Activated naive CD4-positive, alpha-beta T cell treated with anti-CD3 and anti-CD28 coated beads for 36 hours (primary cell): ENCODE measurements at regions of chr5 and their contacts with region 1.

Region 1: DNA sequence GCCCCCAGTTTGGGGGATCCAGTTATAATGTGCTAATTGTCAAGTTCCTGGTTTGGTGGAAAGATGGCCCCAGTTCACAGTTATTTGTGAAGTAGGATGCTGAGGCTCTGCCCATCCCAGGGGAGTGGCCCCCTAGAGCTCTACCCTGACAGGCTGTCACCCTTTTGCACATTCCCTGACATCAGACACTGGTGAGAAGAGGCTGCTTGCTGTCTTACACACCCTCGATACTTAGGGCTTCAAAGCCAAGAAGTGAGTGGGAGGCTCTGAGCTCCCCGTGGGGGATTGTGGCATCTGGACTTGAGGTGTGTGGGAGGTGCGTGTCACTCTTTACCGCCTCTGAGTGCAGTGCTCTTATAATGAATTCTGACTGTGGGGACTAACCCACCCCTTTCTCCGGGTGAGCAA is 168.5 kb downstream of the DOCK2 start:
- DNase-seq: peak; percentile 81
- H3K4me3 Mint-ChIP-seq: peak overlapping the region; percentile 1
- H3K27ac Mint-ChIP-seq: peak overlapping the region; percentile 92
- H3K4me1 Mint-ChIP-seq: peaks cover 38% of the 10 kb centered on the region
- H3K27me3 Mint-ChIP-seq: no peaks in the 10 kb centered on the region

Region 2: DNA sequence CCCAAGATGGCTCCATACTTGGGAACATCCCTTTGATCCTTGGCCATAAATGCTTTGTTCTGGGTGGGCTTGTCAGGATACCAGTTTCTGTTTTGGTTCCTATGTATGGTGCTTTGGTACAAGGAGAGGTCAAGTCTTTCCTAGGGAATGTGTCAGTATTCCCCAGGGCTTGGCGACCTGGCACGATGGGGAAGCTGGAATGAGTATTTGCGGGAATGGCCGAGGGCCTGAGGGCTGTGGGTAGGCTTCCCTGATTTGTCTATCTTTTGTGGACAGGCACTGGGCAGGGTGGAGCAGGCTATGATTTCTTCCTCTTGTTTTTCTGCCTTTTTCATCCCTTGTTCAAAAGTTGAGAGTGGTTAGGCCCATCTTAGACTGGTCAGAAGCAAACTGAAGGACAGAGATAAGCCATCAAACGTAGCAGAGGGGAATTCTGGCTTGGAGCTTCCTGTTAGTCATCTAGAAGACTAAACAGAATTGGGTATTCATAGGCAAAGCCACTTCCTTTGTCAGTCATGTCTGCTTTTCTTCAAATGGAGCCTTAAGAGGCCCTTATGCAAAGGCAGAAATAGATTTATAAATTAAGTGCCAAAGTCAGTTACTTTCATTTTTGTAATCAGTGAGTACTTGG is 154.7 kb before region 1 on chr5:
- CTCF ChIA-PET with region 1: no interaction called
- intact Hi-C with region 1: loop called (anchors 1 kb)
- DNase-seq: peak; percentile 64
- H3K4me3 Mint-ChIP-seq: peak overlapping the region; percentile 49
- H3K27ac Mint-ChIP-seq: peak overlapping the region; percentile 94
- H3K4me1 Mint-ChIP-seq: peaks cover 92% of the 10 kb centered on the region
- H3K27me3 Mint-ChIP-seq: no peaks in the 10 kb centered on the region

Region 3: GRCh38 chr5:169656125-169656901 is 149.2 kb before region 1 on chr5:
- CTCF ChIA-PET with region 1: no interaction called
- intact Hi-C with region 1: loop called (anchors 1 kb)
- DNase-seq: peak; percentile 61
- H3K4me3 Mint-ChIP-seq: peak overlapping the region; percentile 29
- H3K27ac Mint-ChIP-seq: peak overlapping the region; percentile 77
- H3K4me1 Mint-ChIP-seq: peaks cover 61% of the 10 kb centered on the region
- H3K27me3 Mint-ChIP-seq: no peaks in the 10 kb centered on the region

Region 4: GRCh38 chr5:169788166-169788565 is 17.4 kb before region 1 on chr5:
- CTCF ChIA-PET with region 1: no interaction called
- intact Hi-C with region 1: no loop called
- DNase-seq: no peak
- H3K4me3 Mint-ChIP-seq: no peak overlapping the region
- H3K27ac Mint-ChIP-seq: no peak overlapping the region
- H3K4me1 Mint-ChIP-seq: no peaks in the 10 kb centered on the region
- H3K27me3 Mint-ChIP-seq: no peaks in the 10 kb centered on the region

Region 5: DNA sequence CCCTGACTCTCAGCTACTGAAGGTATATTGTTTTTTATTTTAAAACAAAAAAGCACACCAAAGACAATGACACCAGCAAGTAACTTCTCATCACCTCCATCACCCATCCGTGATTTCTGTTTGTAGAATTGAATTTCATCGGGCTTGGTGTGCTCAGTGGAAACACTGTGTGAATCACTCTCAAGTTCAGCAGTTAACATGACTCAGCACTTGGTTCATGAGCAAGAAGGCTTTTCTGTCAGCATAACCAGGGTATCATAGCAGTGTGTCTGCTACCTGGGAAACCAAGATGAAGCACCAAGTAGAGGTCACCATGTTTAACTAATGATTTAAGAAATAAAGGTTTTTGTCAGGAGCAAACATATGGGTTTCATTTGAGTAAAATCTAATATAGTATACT is 51.0 kb after region 1 on chr5:
- CTCF ChIA-PET with region 1: no interaction called
- intact Hi-C with region 1: loop called (anchors 2 kb)
- DNase-seq: peak; percentile 9
- H3K4me3 Mint-ChIP-seq: no peak overlapping the region
- H3K27ac Mint-ChIP-seq: no peak overlapping the region
- H3K4me1 Mint-ChIP-seq: peaks cover 28% of the 10 kb centered on the region
- H3K27me3 Mint-ChIP-seq: no peaks in the 10 kb centered on the region

Region 6: DNA sequence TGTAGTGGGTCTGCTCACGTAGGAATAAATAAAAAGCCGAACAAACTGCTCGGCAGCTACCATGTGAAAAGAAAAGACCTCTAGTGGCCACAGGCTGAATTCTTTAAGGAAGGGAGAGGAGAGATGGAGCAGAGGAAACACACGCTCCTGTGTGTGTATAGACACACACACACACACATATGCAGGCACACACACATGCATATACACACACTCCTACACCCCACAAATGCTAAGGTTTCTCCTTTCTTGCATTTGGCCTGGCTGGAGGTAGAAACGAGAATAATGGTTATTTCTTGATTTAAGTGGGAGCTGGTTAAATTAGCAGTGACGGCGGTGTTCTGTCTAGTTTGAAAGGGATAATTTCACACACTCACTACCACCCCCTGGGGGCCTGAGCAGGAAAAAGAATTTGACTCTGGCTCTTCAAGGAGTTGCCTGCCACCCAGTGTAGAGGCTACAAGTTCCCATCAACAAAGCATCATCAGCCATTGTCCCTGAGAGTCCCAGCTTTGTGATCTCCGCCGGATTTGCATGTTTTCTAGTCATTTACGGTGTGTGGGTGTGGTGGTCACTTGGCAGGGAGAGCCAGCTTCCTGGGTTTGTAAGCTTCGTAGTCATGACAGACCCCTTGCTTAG is 175.0 kb after region 1 on chr5 and contains the start of gene INSYN2B:
- CTCF ChIA-PET with region 1: no interaction called
- intact Hi-C with region 1: loop called (anchors 2 kb)
- DNase-seq: peak; percentile 59
- H3K4me3 Mint-ChIP-seq: no peak within 1 kb of the TSS
- H3K27ac Mint-ChIP-seq: no peak within 1 kb of the TSS
- H3K4me1 Mint-ChIP-seq: no peaks in the 10 kb centered on the region
- H3K27me3 Mint-ChIP-seq: no peaks in the 10 kb centered on the region
- total RNA-seq, gene INSYN2B: not detected

Region 7: GRCh38 chr5:170070556-170071412 is 265.3 kb after region 1 on chr5:
- CTCF ChIA-PET with region 1: interaction called, 3 read pairs
- intact Hi-C with region 1: loop called (anchors 10 kb)
- DNase-seq: no peak
- H3K4me3 Mint-ChIP-seq: no peak overlapping the region
- H3K27ac Mint-ChIP-seq: no peak overlapping the region
- H3K4me1 Mint-ChIP-seq: peaks cover under 1% of the 10 kb centered on the region
- H3K27me3 Mint-ChIP-seq: no peaks in the 10 kb centered on the region